Psoas muscle (tissue), 8 donors: ENCODE measurements at regions of chr11 and their contacts with region 1.

Region 1: GRCh38 chr11:65575568-65576231 is at the start of gene EHBP1L1:
- DNase-seq: peak; percentile 81 to 88
- ATAC-seq: peak; percentile 8 to 24 (median 16)
- H3K4me3 ChIP-seq: peak within 1 kb of the TSS; percentile 99
- H3K27ac ChIP-seq: peak within 1 kb of the TSS; percentile 98
- H3K4me1 ChIP-seq: peaks cover 69% of the 10 kb centered on the region
- H3K27me3 ChIP-seq: no peaks in the 10 kb centered on the region
- CTCF ChIP-seq: no peak
- total RNA-seq, gene EHBP1L1: 208 to 345 (median 282) TPM

Region 2: DNA sequence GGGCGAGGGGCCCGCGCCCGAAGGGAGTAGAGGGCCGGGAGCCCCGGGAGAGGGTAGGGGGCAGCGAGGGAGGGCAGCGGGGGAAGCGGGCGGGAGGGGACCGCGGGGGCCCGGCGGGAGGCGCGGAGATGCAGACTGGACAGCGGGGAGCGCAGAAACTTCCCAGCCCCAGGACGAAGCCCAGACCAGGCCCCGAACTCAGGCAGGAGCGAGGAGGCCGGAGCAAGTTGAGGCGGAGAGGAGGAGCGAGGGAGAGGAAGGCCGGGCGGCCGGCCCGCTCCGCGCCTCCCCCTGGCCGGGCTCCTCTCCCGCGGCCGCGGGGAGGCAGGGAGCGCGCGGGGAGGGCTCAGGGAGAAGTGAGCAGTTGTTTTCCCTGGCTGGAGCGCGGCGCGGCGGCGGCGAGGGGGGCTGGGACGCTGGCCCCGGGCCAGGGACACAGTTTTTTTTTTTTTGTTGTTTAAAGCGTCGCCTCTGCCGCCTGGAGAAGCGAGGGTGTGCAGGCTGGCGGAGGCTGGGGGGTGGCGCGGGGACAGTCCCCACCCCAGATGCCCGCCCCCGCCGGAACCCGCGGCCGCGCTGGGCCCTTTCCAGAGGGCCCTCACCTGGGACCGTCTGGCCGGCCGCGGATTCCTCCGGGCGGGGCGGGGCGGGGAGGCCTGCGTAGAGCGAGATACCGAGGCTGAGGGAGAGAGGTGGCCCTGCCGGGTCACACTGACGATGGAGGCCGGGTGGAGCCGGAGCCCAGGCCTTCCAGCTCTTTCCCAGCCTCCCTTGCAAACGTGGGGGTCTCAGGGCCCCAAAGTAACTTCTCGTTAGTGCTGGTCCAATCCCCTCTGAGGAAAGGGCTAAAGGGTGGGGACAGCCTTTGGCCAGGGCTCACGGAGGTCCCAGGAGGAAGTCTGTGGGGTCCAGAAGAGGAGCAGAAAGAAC is 17.4 kb before region 1 on chr11 and contains the start of gene LTBP3:
- intact Hi-C with region 1: loop called in 1 of 2 experiments (anchors 2 kb)
- DNase-seq: peak; percentile 89 to 93
- ATAC-seq: peak; percentile 68 to 84 (median 77)
- H3K4me3 ChIP-seq: peak within 1 kb of the TSS; percentile 75
- H3K27ac ChIP-seq: peak within 1 kb of the TSS; percentile 99
- H3K4me1 ChIP-seq: peaks cover 57% of the 10 kb centered on the region
- H3K27me3 ChIP-seq: no peaks in the 10 kb centered on the region
- CTCF ChIP-seq: no peak
- total RNA-seq, gene LTBP3: 27.9 to 82.3 (median 51.4) TPM